ENCODE measurements at regions of chr17 and their contacts with region 1.

Region 1: GRCh38 chr17:46159686-46160085 is 33.5 kb downstream of the KANSL1 start:
- DNase-seq: no peak
- H3K4me3 ChIP-seq: no peak overlapping the region
- H3K27ac ChIP-seq: no peak overlapping the region
- H3K4me1 ChIP-seq: peaks cover 0 to 10% (median 4%) of the 10 kb centered on the region in 4 experiments; a peak in 4 of 7 replicates
- H3K27me3 ChIP-seq: no peaks in the 10 kb centered on the region
- CTCF ChIP-seq: no peak
- EP300 ChIP-seq: no peak
- POLR2A ChIP-seq: no peak
- RAD21 ChIP-seq: no peak

Region 2: GRCh38 chr17:46092991-46093390 is 66.7 kb before region 1 on chr17:
- CTCF ChIA-PET with region 1: no interaction called
- POLR2A ChIA-PET with region 1: no interaction called
- DNase-seq: no peak
- H3K4me3 ChIP-seq: no peak overlapping the region
- H3K27ac ChIP-seq: no peak overlapping the region
- H3K4me1 ChIP-seq: no peaks in the 10 kb centered on the region
- H3K27me3 ChIP-seq: no peaks in the 10 kb centered on the region
- CTCF ChIP-seq: no peak
- EP300 ChIP-seq: no peak
- POLR2A ChIP-seq: no peak
- RAD21 ChIP-seq: no peak

Region 3: DNA sequence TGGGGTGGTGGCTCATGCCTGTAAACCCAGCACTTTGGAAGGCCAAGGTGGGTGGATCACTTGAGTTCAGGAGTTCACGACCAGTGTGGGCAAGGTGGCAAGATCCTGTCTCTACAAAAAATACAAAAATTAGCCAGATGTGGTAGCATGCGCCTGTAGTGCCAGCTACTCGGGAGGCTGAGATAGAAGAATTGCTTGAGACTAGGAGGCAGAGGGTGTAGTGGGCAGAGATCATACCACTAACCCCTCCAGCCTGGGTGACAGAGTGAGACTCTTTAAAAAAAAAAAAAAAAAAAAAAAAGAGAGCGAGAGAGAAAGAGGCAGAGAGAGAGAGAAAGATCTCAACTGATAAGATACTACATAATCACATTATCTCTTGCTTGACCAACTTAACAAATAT is 12.4 kb before region 1 on chr17:
- CTCF ChIA-PET with region 1: interaction called, 10 read pairs
- POLR2A ChIA-PET with region 1: interaction called, 13 read pairs
- DNase-seq: no peak
- H3K4me3 ChIP-seq: no peak overlapping the region
- H3K27ac ChIP-seq: no peak overlapping the region
- H3K4me1 ChIP-seq: peaks cover 0 to 13% (median 1%) of the 10 kb centered on the region in 4 experiments; a peak in 3 of 7 replicates
- H3K27me3 ChIP-seq: no peaks in the 10 kb centered on the region
- CTCF ChIP-seq: no peak
- EP300 ChIP-seq: no peak
- POLR2A ChIP-seq: no peak
- RAD21 ChIP-seq: no peak

Region 4: GRCh38 chr17:46179375-46179999 is 19.8 kb after region 1 on chr17:
- CTCF ChIA-PET with region 1: interaction called, 16 read pairs
- POLR2A ChIA-PET with region 1: interaction called, 208 read pairs
- DNase-seq: no peak
- H3K4me3 ChIP-seq: no peak overlapping the region; a peak in 1 of 8 replicates
- H3K27ac ChIP-seq: peak overlapping the region; percentile 43; the same call in 1 of the 2 replicates
- H3K4me1 ChIP-seq: peaks cover 13 to 41% (median 31%) of the 10 kb centered on the region in 4 experiments
- H3K27me3 ChIP-seq: no peaks in the 10 kb centered on the region
- CTCF ChIP-seq: no peak
- EP300 ChIP-seq: no peak
- POLR2A ChIP-seq: no peak; a peak in 1 of 3 replicates
- RAD21 ChIP-seq: no peak

Measured in H1 (cell line).